Aorta (tissue), 5 donors: ENCODE measurements at regions of chr5 and their contacts with region 1.

Region 1: GRCh38 chr5:116068028-116068632 is 16.7 kb upstream of the COMMD10 start:
- DNase-seq: no peak
- ATAC-seq: no peak
- H3K4me3 ChIP-seq: no peak overlapping the region
- H3K27ac ChIP-seq: no peak overlapping the region
- H3K4me1 ChIP-seq: no peaks in the 10 kb centered on the region
- H3K27me3 ChIP-seq: no peaks in the 10 kb centered on the region

Region 2: DNA sequence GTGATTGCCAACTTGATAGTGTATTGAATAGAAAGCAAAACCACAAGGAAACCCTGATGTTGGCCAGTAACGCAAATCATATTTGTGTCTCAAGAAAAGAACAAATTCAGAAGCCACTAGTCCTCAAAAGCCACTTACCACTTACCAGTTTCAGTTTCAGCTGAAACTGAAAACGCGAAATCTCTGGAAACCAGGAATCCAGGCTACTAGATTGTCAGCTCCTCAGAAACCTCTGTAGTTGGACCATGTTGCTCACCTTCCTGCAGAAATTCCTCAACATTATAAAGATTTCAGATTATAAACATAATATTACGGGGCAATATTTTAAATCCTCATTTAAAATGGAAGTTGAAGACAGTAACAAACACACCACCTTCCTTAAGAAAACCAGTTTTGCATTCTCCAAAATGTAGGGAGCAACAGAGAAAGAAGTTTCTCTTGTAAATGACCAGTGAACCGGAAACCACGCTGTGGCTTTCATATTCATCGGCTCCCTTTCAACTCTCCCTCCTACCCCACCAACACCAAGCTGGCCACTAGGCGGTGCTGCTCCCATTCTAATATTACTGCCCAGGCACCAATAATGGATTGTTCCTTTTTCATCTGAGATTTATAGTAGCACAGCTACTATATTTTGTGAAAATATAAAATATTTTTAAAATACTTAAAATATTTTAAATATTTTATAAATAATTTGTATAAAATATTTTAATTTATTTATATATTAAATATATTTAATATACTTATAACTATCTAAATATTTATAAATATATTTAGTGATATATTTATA is 433.6 kb before region 1 on chr5:
- intact Hi-C with region 1: loop called in 1 of 2 experiments (anchors 5 kb)
- DNase-seq: peak; percentile 93 to 96
- ATAC-seq: peak; percentile 93
- H3K4me3 ChIP-seq: peak overlapping the region; percentile 20 to 60
- H3K27ac ChIP-seq: peak overlapping the region in 1 of 2 donors; percentile 34
- H3K4me1 ChIP-seq: no peaks in the 10 kb centered on the region
- H3K27me3 ChIP-seq: no peaks in the 10 kb centered on the region

Region 3: GRCh38 chr5:115888027-115888426 is 180.1 kb before region 1 on chr5:
- intact Hi-C with region 1: no loop called
- DNase-seq: no peak
- ATAC-seq: no peak
- H3K4me3 ChIP-seq: no peak overlapping the region
- H3K27ac ChIP-seq: no peak overlapping the region
- H3K4me1 ChIP-seq: no peaks in the 10 kb centered on the region
- H3K27me3 ChIP-seq: no peaks in the 10 kb centered on the region

Region 4: DNA sequence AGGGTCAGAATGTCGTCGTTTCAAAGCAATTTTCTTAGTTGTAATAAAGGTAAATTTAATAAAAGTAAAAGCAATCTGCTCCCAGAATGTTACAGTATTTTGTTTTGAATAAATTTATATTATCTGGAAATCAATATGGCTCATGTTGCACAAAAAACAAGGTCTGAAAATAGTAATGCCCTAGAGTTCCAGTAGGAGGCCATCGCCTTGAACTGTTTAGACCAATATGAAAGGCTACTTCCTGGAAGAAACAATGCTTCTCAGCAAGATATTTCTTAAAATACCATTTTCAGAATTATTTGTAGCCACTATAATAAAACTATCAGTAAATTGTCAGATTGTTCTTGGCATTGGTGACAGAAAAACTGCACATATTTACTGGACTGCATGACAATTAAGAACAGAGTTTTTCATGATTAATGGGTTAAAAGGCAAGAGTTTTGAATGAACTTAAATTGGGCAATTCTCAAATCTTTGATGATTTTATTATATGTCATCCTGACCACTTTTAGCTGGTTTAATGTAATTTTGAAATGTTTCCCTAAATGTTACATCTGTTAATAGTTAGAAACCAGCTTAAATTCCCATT is 169.9 kb after region 1 on chr5:
- intact Hi-C with region 1: no loop called
- DNase-seq: no peak
- ATAC-seq: no peak
- H3K4me3 ChIP-seq: no peak overlapping the region
- H3K27ac ChIP-seq: no peak overlapping the region
- H3K4me1 ChIP-seq: no peaks in the 10 kb centered on the region
- H3K27me3 ChIP-seq: no peaks in the 10 kb centered on the region